Activated T-helper 1 cell treated with anti-CD3 and anti-CD28 coated beads, Interleukin-12 subunit alpha, Interleukin-12 subunit beta, Interleukin-2, Interleukin-4 antibody, amounts not matched to agents 30 ng/mL and 10 ng/mL and 1 ng/mL, durations not matched to agents 14 hours and 24 hours and 36 hours (primary cell): ENCODE measurements at regions of chr18 and their contacts with region 1.

Region 1: DNA sequence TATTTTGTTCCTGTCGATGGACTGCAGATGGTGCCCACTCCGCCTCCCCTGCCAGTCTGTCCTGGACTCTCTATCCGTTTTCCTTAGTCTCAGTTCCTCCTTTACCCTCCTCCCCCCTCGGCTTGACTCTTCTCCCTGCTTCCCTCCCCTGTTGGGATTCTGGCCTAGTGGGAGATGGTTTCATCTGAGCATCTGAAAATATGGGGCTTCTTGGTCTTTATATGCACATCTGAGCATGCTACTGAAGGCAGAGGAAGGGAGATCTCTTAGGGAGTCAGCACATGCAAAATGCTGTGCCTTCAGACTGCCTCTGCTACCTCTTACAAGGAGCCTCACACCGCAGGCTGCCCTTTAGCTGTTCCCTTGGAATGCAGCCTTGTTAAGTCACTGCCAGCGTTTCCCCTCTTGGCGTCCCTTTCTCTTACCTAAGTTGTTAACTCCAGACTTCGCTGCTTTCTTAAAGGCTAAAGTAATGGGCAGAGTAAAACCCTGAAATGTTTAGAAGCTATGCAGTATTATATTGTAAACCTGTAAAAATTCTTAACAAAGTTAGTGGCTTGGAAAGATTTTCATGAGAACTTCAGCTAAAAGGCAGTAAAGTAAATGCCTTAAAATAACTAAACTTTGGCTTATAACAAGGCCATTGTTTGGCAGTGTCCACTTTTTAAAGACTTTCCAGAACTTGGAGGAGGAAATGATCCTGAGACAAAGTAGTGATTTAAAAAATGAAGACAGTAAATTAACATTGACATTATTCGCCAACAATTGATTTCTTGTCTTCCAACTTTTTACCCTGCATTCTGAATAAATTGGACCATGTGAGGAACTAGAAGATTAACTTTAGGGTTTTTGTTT is 49.8 kb downstream of the LDLRAD4 start:
- DNase-seq: no peak
- H3K4me3 Mint-ChIP-seq: peak overlapping the region; percentile 19
- H3K27ac Mint-ChIP-seq: peak overlapping the region; percentile 74
- H3K4me1 Mint-ChIP-seq: peaks cover 62% of the 10 kb centered on the region
- H3K27me3 Mint-ChIP-seq: peaks cover 7% of the 10 kb centered on the region

Region 2: GRCh38 chr18:12990967-12991838 is 277.2 kb before region 1 on chr18 and contains the start of gene CEP192:
- intact Hi-C with region 1: loop called (anchors 5 kb)
- DNase-seq: peak; percentile 98
- H3K4me3 Mint-ChIP-seq: peak within 1 kb of the TSS; percentile 93
- H3K27ac Mint-ChIP-seq: peak within 1 kb of the TSS; percentile 94
- H3K4me1 Mint-ChIP-seq: peaks cover 24% of the 10 kb centered on the region
- H3K27me3 Mint-ChIP-seq: peaks cover 1% of the 10 kb centered on the region
- total RNA-seq, gene CEP192: 31.2 and 32.0 TPM in 2 replicates

Region 3: GRCh38 chr18:13313006-13313686 is 44.8 kb after region 1 on chr18:
- intact Hi-C with region 1: loop called (anchors 2 kb)
- DNase-seq: no peak
- H3K4me3 Mint-ChIP-seq: no peak overlapping the region
- H3K27ac Mint-ChIP-seq: peak overlapping the region; percentile 30
- H3K4me1 Mint-ChIP-seq: peaks cover 35% of the 10 kb centered on the region
- H3K27me3 Mint-ChIP-seq: no peaks in the 10 kb centered on the region

Region 4: DNA sequence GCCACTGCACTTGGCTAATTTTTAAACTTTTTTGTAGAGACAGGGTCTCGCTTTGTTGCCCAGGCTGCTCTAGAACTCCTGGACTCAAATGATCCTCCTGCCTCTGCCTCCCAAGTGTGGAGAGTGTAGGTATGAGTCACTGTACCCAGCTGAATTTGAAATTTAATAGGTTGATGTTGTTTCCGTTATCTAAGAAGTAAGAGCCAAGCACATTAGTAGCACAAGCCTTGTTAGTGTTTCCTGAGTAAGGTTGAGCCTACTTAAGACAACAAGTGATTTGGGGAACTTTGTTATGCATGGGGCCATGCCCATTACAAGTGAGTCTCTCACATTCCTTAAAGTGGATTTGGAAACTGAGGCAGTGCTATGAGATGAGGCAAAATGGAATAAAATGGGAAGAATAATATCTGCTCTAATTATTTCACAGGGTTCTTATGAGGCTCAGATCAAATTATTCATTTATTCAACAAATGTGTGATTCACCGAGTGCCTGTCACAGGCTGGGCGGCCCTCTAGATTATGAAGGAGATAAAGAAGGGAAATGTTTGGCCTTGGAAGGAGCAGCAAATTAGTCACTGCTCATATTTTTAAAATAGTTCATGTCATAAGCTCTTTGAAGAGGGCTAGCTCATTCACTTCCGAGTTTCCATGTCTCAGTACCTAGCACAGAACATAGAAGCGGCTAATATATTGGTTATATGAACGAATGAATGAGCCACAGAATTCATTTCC is 167.4 kb after region 1 on chr18:
- intact Hi-C with region 1: loop called (anchors 1 kb)
- DNase-seq: no peak
- H3K4me3 Mint-ChIP-seq: no peak overlapping the region
- H3K27ac Mint-ChIP-seq: no peak overlapping the region
- H3K4me1 Mint-ChIP-seq: peaks cover 68% of the 10 kb centered on the region
- H3K27me3 Mint-ChIP-seq: no peaks in the 10 kb centered on the region

Region 5: DNA sequence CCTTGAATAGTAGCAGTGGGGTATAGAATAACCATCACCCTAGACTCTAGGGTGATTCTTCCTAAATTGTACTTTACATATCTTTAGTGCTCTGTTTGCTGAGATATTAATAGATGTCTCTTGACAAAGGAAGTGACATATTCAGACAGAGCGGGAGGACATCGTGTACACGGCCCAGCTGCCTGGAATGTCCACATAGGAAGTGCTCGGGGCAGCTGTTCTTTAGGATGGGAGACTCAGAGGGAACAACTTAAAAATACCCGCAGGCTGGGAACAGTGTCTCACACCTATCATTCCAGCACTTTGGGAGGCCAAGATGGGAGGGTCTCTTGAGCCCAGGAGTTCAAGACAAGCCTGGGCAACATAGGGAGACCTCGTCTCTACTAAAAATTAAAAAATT is 251.9 kb after region 1 on chr18:
- intact Hi-C with region 1: no loop called
- DNase-seq: no peak
- H3K4me3 Mint-ChIP-seq: no peak overlapping the region
- H3K27ac Mint-ChIP-seq: no peak overlapping the region
- H3K4me1 Mint-ChIP-seq: peaks cover 2% of the 10 kb centered on the region
- H3K27me3 Mint-ChIP-seq: peaks cover 2% of the 10 kb centered on the region

Region 6: DNA sequence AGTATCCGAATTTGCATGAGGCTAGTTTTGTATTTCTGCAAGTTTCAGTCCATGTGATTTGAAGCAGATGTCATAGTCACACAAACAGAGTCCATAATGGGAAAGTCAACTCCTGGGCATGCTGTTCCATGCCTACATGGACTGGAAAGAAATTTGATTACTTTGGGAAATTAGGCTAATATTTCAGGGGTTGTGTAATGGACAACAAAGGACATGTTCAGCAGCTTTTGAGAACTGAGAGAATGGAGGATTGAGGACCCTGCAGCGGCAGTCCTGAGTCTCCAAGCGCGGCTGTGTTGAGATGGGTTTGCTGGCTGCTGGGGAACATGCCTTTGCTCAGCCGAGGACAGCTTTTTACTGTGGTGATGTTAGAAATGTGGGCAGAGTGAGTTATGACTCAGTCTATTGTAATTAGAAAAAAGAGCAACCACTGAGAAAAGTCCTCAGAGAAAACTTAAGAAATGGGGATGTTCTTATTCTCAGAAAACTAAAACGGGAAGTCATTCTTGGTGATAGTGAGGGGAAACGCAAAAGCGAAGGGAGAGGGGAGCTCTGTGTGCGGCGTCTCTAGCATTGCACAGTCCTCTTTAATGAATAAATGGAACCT is 308.8 kb after region 1 on chr18:
- intact Hi-C with region 1: loop called (anchors 2 kb)
- DNase-seq: peak; percentile 41
- H3K4me3 Mint-ChIP-seq: peak overlapping the region; percentile 67
- H3K27ac Mint-ChIP-seq: peak overlapping the region; percentile 87
- H3K4me1 Mint-ChIP-seq: peaks cover 56% of the 10 kb centered on the region
- H3K27me3 Mint-ChIP-seq: no peaks in the 10 kb centered on the region